ENCODE measurements at regions of chr1 and their contacts with region 1.

Region 1: GRCh38 chr1:1906185-1907097 is 8.6 kb upstream of the CALML6 start:
- DNase-seq: peak; percentile 86 to 88 (median 87)
- ATAC-seq: peak; percentile 66
- H3K4me3 ChIP-seq: no peak overlapping the region
- H3K4me1 ChIP-seq: peaks cover 11% of the 10 kb centered on the region
- CTCF ChIP-seq: peak; percentile 92

Region 2: GRCh38 chr1:1779706-1780597 is 126.5 kb before region 1 on chr1:
- intact Hi-C with region 1: loop called in 1 of 2 experiments (anchors 10 kb)
- DNase-seq: peak; percentile 73 to 79 (median 77)
- ATAC-seq: peak; percentile 32
- H3K4me3 ChIP-seq: no peak overlapping the region
- H3K4me1 ChIP-seq: peaks cover 69% of the 10 kb centered on the region
- CTCF ChIP-seq: no peak